A673 (cell line): ENCODE measurements at regions of chr14 and their contacts with region 1.

Region 1: DNA sequence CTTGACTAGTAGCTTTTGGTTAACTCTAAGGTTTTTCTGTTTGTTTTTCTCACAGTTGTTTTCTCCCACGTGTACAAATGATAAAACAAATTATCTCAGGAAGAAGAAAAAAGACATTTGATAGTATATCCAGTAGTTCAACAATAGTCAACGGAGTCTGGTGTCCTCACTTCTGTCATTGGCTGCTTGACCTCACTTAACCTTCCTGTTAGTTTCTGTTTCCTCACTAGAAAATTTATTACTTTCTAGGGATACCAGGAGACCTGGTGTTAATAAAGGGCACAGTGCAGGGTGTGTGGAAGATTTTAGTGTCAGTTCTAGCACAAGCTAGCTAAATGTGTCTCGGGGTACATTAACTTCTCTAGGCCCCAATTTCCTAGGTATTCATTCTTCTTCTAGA is 116.0 kb downstream of the PRKCH start:
- DNase-seq: no peak
- H3K4me3 ChIP-seq: no peak overlapping the region
- H3K27ac ChIP-seq: no peak overlapping the region
- H3K4me1 ChIP-seq: peaks cover 35% of the 10 kb centered on the region
- H3K27me3 ChIP-seq: no peaks in the 10 kb centered on the region
- CTCF ChIP-seq: no peak

Region 2: GRCh38 chr14:60657456-60658210 is 779.7 kb before region 1 on chr14:
- CTCF ChIA-PET with region 1: no interaction called
- POLR2A ChIA-PET with region 1: no interaction called
- intact Hi-C with region 1: no loop called
- DNase-seq: no peak
- H3K4me3 ChIP-seq: peak overlapping the region; percentile 40
- H3K27ac ChIP-seq: peak overlapping the region; percentile 65
- H3K4me1 ChIP-seq: peaks cover 28% of the 10 kb centered on the region
- H3K27me3 ChIP-seq: no peaks in the 10 kb centered on the region
- CTCF ChIP-seq: no peak

Region 3: GRCh38 chr14:61296719-61297502 is 140.5 kb before region 1 on chr14:
- CTCF ChIA-PET with region 1: no interaction called
- POLR2A ChIA-PET with region 1: interaction called, 15 read pairs
- intact Hi-C with region 1: no loop called
- DNase-seq: peak; percentile 55
- H3K4me3 ChIP-seq: no peak overlapping the region
- H3K27ac ChIP-seq: no peak overlapping the region
- H3K4me1 ChIP-seq: no peaks in the 10 kb centered on the region
- H3K27me3 ChIP-seq: no peaks in the 10 kb centered on the region
- CTCF ChIP-seq: peak; percentile 81